B cell (primary cell): ENCODE measurements at regions of chr15 and their contacts with region 1.

Region 1: DNA sequence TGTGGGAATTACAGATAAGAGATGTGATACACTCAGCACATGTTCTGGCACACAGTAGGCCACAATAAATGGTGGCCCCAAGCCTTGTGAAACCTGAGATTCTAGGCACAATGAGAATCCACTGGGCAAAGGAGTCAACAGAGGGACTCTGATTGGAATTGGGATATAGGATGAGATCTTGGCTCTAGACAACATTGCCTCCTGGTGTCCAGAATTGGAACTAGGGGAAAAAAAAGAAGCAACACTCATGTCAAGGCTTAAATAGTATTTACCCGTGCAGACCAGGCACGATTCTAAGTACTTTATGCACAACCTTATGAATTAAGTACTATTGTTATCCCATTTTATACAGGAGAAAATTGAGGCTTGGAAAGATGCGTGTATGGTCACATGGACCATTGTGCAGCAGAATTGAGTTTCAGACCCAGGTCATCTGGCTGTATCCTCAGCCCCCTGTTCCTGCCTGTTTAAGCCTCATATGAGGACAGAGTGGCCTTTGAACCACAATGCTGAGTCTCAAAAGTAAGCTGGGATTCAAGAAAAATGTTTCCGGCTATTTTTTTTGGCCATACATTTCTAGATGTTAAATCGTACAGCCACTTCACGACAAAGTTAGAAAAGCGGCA is 124.8 kb downstream of the SV2B start:
- DNase-seq: peak; percentile 16
- ATAC-seq: no peak
- H3K4me3 ChIP-seq: no peak overlapping the region
- H3K4me3 Mint-ChIP-seq: no peak overlapping the region
- H3K27ac ChIP-seq: no peak overlapping the region
- H3K27ac Mint-ChIP-seq: no peak overlapping the region
- H3K4me1 ChIP-seq: no peaks in the 10 kb centered on the region
- H3K4me1 Mint-ChIP-seq: no peaks in the 10 kb centered on the region
- H3K27me3 ChIP-seq: peaks cover 0 to 11% (median 5%) of the 10 kb centered on the region in 4 experiments
- H3K27me3 Mint-ChIP-seq: peaks cover 54% of the 10 kb centered on the region
- CTCF ChIP-seq: peak; percentile 64

Region 2: GRCh38 chr15:91055548-91056331 is 169.1 kb before region 1 on chr15:
- CTCF ChIA-PET with region 1: no interaction called
- POLR2A ChIA-PET with region 1: no interaction called
- intact Hi-C with region 1: loop called (anchors 5 kb)
- DNase-seq: peak; percentile 41
- ATAC-seq: peak; percentile 33
- H3K4me3 ChIP-seq: no peak overlapping the region
- H3K4me3 Mint-ChIP-seq: no peak overlapping the region
- H3K27ac ChIP-seq: no peak overlapping the region
- H3K27ac Mint-ChIP-seq: no peak overlapping the region
- H3K4me1 ChIP-seq: peaks cover 5% of the 10 kb centered on the region in 2 donors
- H3K4me1 Mint-ChIP-seq: no peaks in the 10 kb centered on the region
- H3K27me3 ChIP-seq: peaks cover 0 to 28% (median 19%) of the 10 kb centered on the region in 4 experiments
- H3K27me3 Mint-ChIP-seq: peaks cover 75% of the 10 kb centered on the region
- CTCF ChIP-seq: peak; percentile 62

Region 3: GRCh38 chr15:91263996-91264531 is 39.2 kb after region 1 on chr15:
- CTCF ChIA-PET with region 1: no interaction called
- POLR2A ChIA-PET with region 1: no interaction called
- intact Hi-C with region 1: no loop called
- DNase-seq: no peak
- ATAC-seq: no peak
- H3K4me3 ChIP-seq: no peak overlapping the region
- H3K4me3 Mint-ChIP-seq: no peak overlapping the region
- H3K27ac ChIP-seq: no peak overlapping the region
- H3K27ac Mint-ChIP-seq: no peak overlapping the region
- H3K4me1 ChIP-seq: no peaks in the 10 kb centered on the region
- H3K4me1 Mint-ChIP-seq: peaks cover 3% of the 10 kb centered on the region
- H3K27me3 ChIP-seq: peaks cover 0 to 17% (median 1%) of the 10 kb centered on the region in 4 experiments
- H3K27me3 Mint-ChIP-seq: peaks cover 26% of the 10 kb centered on the region
- CTCF ChIP-seq: no peak